SK-N-SH (cell line): ENCODE measurements at regions of chr2 and their contacts with region 1.

Region 1: GRCh38 chr2:25165992-25166875 is 2.1 kb downstream of the POMC start:
- DNase-seq: peak; percentile 73
- H3K4me3 ChIP-seq: no peak overlapping the region
- H3K27ac ChIP-seq: no peak overlapping the region
- H3K4me1 ChIP-seq: peaks cover 0 to 8% of the 10 kb centered on the region in 2 experiments; a peak in 1 of 4 replicates
- H3K27me3 ChIP-seq: peaks cover 42% of the 10 kb centered on the region
- CTCF ChIP-seq: peak; percentile 41
- EP300 ChIP-seq: no peak
- RAD21 ChIP-seq: peak; percentile 79

Region 2: DNA sequence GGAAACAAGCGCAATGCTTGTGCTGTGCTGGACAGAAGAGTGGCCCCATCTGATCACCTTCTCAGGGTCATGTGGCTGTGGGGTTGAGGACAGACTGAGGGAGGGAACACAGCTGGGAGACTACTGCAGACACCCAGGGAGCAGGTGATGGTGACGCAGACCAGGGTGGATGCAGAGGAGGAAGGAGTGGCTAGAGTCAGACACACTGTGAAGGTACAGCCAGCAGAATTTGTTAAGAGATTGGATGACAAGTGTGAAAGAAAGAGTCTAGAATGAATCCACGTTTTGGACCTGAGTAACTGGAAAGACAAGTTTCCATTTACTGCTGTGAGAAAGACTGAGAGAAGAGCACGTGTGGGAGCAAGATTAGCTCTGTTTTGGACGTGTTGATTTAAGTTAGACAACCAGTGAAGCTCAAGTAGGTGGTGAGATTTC is 18.0 kb after region 1 on chr2:
- CTCF ChIA-PET with region 1: interaction called, 11 read pairs
- POLR2A ChIA-PET with region 1: no interaction called
- DNase-seq: no peak
- H3K4me3 ChIP-seq: no peak overlapping the region
- H3K27ac ChIP-seq: no peak overlapping the region
- H3K4me1 ChIP-seq: no peaks in the 10 kb centered on the region
- H3K27me3 ChIP-seq: peaks cover 8% of the 10 kb centered on the region; the same call in 1 of the 2 replicates
- CTCF ChIP-seq: no peak
- EP300 ChIP-seq: no peak
- RAD21 ChIP-seq: no peak